ENCODE measurements at regions of chrX and their contacts with region 1.

Region 1: GRCh38 chrX:74680391-74680790 is 66.0 kb upstream of the RLIM start:
- DNase-seq: no peak
- ATAC-seq: no peak
- H3K4me3 ChIP-seq: no peak overlapping the region
- H3K27ac ChIP-seq: no peak overlapping the region
- H3K4me1 ChIP-seq: no peaks in the 10 kb centered on the region
- H3K27me3 ChIP-seq: no peaks in the 10 kb centered on the region
- CTCF ChIP-seq: no peak
- EP300 ChIP-seq: no peak
- POLR2A ChIP-seq: no peak
- RAD21 ChIP-seq: no peak

Region 2: DNA sequence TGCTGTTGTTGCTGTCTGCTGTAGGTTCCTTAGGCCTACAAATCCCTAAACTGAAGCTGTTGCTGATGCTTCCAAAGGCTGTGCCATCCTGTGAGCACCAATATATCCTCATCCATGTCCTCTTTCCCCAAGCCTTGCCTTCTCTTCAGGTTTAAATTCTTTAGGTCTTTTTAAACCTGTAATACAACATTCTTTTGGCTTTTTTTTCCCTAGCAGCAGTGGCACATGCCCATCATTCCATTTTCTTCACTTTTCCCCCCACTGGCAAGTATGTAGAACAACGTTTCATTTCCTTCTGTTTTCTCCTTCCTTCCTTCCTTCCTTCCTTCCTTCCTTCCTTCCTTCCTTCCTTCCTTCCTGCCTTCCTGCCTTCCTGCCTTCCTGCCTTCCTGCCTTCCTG is 14.1 kb before region 1 on chrX:
- CTCF ChIA-PET with region 1: no interaction called
- POLR2A ChIA-PET with region 1: no interaction called
- in situ Hi-C with region 1: no loop called
- intact Hi-C with region 1: loop called (anchors 1 kb)
- DNase-seq: no peak
- ATAC-seq: no peak
- H3K4me3 ChIP-seq: no peak overlapping the region
- H3K27ac ChIP-seq: no peak overlapping the region
- H3K4me1 ChIP-seq: no peaks in the 10 kb centered on the region
- H3K27me3 ChIP-seq: no peaks in the 10 kb centered on the region
- CTCF ChIP-seq: no peak
- EP300 ChIP-seq: no peak
- POLR2A ChIP-seq: no peak
- RAD21 ChIP-seq: no peak

Measured in K562 (cell line).